Heart left ventricle (tissue), 16 donors: ENCODE measurements at regions of chr6 and their contacts with region 1.

Region 1: DNA sequence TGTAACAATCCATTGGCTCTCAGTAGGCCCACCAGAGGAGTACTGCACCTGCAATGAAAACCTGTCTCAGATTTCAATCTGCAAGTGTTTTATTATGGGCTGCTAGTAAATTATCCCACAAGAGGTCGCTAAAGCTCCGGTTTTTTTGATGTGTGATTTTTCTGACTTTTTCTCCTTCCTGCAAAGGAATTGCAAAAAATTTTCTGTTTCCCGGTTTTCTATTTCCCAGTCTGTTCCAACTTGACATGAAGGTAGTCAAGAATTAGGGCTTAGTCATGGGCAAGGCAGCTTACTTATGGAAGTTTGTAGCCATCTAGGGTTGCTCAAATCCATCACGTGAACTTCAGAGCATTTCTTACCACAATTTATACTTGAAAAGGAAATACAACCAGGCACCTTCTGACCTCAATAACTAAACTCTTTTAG is 38.5 kb upstream of the AHI1 start:
- DNase-seq: no peak
- ATAC-seq: peak in 1 of 4 donors; percentile 48
- H3K4me3 ChIP-seq: no peak overlapping the region
- H3K27ac ChIP-seq: no peak overlapping the region
- H3K4me1 ChIP-seq: peaks cover 0 to 6% (median 0%) of the 10 kb centered on the region in 12 donors
- H3K27me3 ChIP-seq: no peaks in the 10 kb centered on the region
- CTCF ChIP-seq: peak; percentile 49 to 82 (median 72)
- POLR2A ChIP-seq: no peak

Region 2: DNA sequence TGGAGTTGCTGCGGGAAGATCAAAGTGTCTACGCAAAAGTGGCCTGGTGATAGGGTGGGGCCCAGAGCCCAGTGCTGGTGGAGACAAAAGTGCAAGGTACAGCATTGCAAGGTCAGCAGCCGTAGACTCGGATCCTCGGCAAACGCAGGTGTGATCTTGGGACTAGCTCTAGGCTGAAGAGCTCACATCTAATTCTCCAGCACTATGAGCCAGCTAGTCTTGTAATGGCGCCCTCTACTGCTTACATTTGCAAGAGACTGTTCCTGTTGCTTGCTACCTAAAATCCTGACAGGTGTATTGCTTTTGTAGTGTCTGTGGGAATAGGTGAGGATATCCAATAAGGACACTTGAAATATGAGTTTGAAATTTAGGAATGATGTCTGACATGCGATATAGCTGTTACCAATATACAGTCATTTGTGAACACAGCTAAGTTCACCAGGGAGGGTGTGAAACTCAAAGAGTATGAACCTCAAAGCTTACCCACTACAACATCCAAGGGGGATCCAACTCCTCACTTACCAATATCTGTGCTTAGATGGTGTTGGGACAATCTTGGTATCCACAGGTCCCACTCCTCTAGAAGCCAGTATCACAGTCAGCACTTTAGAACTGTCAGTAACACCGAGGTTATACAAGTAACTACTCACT is 373.9 kb after region 1 on chr6:
- intact Hi-C with region 1: loop called in 4 of 10 experiments (anchors 10 kb)
- DNase-seq: peak in 1 of 5 donors; percentile 27
- ATAC-seq: peak in 1 of 4 donors; percentile 42
- H3K4me3 ChIP-seq: no peak overlapping the region
- H3K27ac ChIP-seq: no peak overlapping the region
- H3K4me1 ChIP-seq: no peaks in the 10 kb centered on the region
- H3K27me3 ChIP-seq: no peaks in the 10 kb centered on the region
- CTCF ChIP-seq: peak in 11 of 12 donors; percentile 27 to 60 (median 49)
- POLR2A ChIP-seq: no peak

Region 3: GRCh38 chr6:136014454-136015421 is 478.7 kb after region 1 on chr6:
- intact Hi-C with region 1: loop called in 1 of 10 experiments (anchors 10 kb)
- DNase-seq: peak in 4 of 5 donors; percentile 28 to 61 (median 44)
- ATAC-seq: peak in 3 of 4 donors; percentile 45 to 76 (median 72)
- H3K4me3 ChIP-seq: peak overlapping the region in 4 of 12 donors; percentile 0 to 32 (median 8)
- H3K27ac ChIP-seq: peak overlapping the region in 6 of 12 donors; percentile 5 to 65 (median 25)
- H3K4me1 ChIP-seq: peaks cover 0 to 37% (median 16%) of the 10 kb centered on the region in 12 donors
- H3K27me3 ChIP-seq: no peaks in the 10 kb centered on the region
- CTCF ChIP-seq: no peak
- POLR2A ChIP-seq: no peak

Region 4: DNA sequence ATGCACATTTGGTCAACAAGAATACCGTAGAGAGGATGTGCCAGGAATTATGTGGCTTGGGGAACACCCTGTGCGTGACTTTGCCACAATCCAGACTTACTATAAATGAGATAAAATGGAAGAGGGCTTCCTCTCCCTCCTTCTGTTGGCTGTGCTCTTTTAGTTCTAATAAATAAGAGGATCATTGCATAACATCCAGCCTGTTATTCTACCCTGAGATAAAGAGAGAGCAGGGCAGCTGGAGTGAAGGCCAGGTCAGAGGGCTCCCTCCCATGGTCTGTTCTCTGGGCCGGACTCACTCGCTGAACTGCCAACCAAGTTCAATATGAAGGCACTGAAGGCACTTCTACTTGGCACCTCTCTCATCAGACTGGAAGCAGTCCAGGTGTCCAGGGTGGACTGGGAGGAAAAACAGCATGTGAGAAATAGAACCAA is 622.4 kb after region 1 on chr6:
- intact Hi-C with region 1: loop called in 1 of 10 experiments (anchors 2 kb)
- DNase-seq: peak; percentile 53 to 79 (median 72)
- ATAC-seq: peak; percentile 86 to 96 (median 90)
- H3K4me3 ChIP-seq: no peak overlapping the region
- H3K27ac ChIP-seq: peak overlapping the region in 11 of 12 donors; percentile 2 to 61 (median 23)
- H3K4me1 ChIP-seq: peaks cover 0 to 47% (median 11%) of the 10 kb centered on the region in 12 donors
- H3K27me3 ChIP-seq: no peaks in the 10 kb centered on the region
- CTCF ChIP-seq: peak in 8 of 12 donors; percentile 26 to 68 (median 36)
- POLR2A ChIP-seq: no peak

Region 5: DNA sequence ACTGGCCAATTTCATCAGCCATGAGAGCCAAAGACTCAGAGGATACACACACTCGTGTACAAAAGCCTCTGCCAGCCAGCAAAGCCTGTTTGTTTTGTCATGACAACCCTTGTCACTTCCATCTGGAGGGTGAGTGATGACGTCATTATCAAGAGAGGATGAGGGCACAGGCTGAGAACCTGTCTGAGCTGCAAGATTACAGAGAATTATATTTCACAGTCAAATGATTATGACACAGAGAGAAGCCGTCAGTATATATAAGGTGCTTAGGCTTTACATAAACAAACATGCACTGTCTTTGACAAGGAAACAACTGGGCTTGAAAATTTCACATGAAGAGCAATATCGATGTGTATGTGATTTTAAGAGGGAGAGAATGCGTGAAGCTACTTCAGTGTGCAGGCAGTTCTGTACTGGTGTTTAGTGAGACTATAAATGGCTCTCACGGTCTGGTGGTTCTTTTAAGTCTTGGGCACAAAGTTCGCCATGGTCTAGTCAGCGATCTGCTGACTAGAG is 790.1 kb after region 1 on chr6:
- intact Hi-C with region 1: loop called in 1 of 10 experiments (anchors 10 kb)
- DNase-seq: no peak
- ATAC-seq: no peak
- H3K4me3 ChIP-seq: no peak overlapping the region
- H3K27ac ChIP-seq: no peak overlapping the region
- H3K4me1 ChIP-seq: peaks cover 0 to 13% (median 0%) of the 10 kb centered on the region in 12 donors
- H3K27me3 ChIP-seq: peaks cover 0 to 2% (median 0%) of the 10 kb centered on the region in 9 donors
- CTCF ChIP-seq: no peak
- POLR2A ChIP-seq: no peak